ENCODE measurements at regions of chr20 and their contacts with region 1.

Region 1: DNA sequence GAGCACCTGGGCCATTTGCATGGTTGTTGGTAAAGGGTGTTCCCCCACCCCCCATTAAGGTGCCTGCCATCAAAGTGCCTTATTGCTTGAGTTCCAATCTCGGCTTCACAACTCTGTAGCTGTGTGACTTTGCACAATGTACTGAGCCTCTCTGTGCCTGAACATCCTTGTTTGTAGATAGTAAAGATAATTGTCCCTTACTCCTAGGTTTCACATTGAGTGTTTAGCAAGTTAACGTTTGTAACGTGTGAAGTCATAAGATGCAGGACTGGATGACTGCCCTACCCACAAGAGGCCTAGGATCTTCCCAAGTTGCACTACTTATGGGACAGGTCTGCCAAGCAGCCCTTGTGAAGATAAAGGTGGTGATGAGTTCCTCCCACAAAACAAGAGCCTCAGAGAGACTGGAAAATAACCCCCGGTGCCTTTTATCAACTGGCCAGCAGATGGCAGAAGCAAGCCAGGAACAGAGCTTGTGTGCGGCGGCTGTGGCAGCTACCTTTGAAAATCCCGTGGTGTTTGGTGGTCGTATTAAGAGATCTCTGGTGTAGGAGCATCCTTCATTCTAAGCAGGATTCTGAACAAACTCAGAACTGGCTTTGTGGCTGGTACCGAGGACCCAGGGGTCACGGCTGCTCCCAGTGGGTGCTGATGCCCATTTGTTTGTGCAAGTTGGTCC is 99.0 kb downstream of the CDH26 start:
- DNase-seq: peak; percentile 38 to 83 (median 54)
- ATAC-seq: peak; percentile 51
- H3K4me3 ChIP-seq: peak overlapping the region; percentile 55
- H3K4me3 Mint-ChIP-seq: peak overlapping the region; percentile 32
- H3K27ac ChIP-seq: peak overlapping the region; percentile 17 to 57
- H3K27ac Mint-ChIP-seq: peak overlapping the region; percentile 89
- H3K4me1 ChIP-seq: peaks cover 50% of the 10 kb centered on the region
- H3K4me1 Mint-ChIP-seq: peaks cover 54% of the 10 kb centered on the region
- H3K27me3 ChIP-seq: no peaks in the 10 kb centered on the region
- H3K27me3 Mint-ChIP-seq: no peaks in the 10 kb centered on the region
- CTCF ChIP-seq: peak; percentile 79

Region 2: GRCh38 chr20:59940174-59940971 is 116.9 kb before region 1 on chr20 and contains the starts of genes FAM217B and PPP1R3D:
- CTCF ChIA-PET with region 1: interaction called, 3 read pairs
- POLR2A ChIA-PET with region 1: interaction called, 32 read pairs
- intact Hi-C with region 1: no loop called
- DNase-seq: peak; percentile 72 to 95 (median 88)
- ATAC-seq: peak; percentile 97
- H3K4me3 ChIP-seq: peak within 1 kb of the TSS; percentile 70
- H3K4me3 Mint-ChIP-seq: peak within 1 kb of the TSS; percentile 99
- H3K27ac ChIP-seq: peak within 1 kb of the TSS; percentile 78 to 91
- H3K27ac Mint-ChIP-seq: peak within 1 kb of the TSS; percentile 99
- H3K4me1 ChIP-seq: peaks cover 23% of the 10 kb centered on the region
- H3K4me1 Mint-ChIP-seq: peaks cover 58% of the 10 kb centered on the region
- H3K27me3 ChIP-seq: no peaks in the 10 kb centered on the region
- H3K27me3 Mint-ChIP-seq: no peaks in the 10 kb centered on the region
- CTCF ChIP-seq: no peak
- total RNA-seq, gene FAM217B: 23.1 to 23.7 TPM
- total RNA-seq, gene PPP1R3D: 5.1 to 5.4 TPM

Region 3: DNA sequence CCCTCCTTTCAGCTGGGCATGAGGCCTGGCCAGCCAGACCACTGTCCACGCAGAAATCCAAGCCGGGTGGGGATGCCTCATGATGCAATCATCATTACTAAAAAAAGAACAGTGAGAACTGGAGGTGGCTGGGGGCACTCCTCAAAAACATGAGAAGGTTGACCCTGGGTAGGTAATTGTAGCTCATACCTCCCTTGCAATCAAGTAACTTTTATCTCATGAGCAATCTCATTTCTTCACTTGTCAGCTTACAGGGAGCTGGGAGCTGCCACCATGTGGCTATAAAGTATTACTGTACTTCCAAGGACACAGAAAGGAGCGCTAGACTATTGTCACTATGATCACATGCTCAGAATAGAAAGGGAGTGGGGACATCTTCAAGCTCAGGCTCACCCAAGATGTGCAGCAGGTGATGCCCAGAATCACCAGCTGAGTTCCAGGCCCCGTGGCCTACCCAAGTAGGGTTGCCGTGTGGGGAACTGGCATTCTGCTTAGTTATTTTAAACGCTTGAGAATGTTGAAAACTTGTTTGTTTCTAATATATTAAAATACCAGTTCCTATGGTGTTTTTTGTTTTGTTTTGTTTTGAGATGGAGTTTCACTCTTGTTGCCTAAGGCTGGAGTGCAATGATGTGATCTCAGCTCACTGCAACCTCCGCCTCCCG is 102.0 kb before region 1 on chr20:
- CTCF ChIA-PET with region 1: no interaction called
- POLR2A ChIA-PET with region 1: no interaction called
- intact Hi-C with region 1: loop called in 1 of 2 experiments (anchors 5 kb)
- DNase-seq: peak in 2 of 14 experiments; percentile 21 to 35
- ATAC-seq: no peak
- H3K4me3 ChIP-seq: no peak overlapping the region
- H3K4me3 Mint-ChIP-seq: no peak overlapping the region
- H3K27ac ChIP-seq: no peak overlapping the region
- H3K27ac Mint-ChIP-seq: no peak overlapping the region
- H3K4me1 ChIP-seq: no peaks in the 10 kb centered on the region
- H3K4me1 Mint-ChIP-seq: no peaks in the 10 kb centered on the region
- H3K27me3 ChIP-seq: no peaks in the 10 kb centered on the region
- H3K27me3 Mint-ChIP-seq: no peaks in the 10 kb centered on the region
- CTCF ChIP-seq: no peak

Region 4: GRCh38 chr20:60820918-60821317 is 763.7 kb after region 1 on chr20:
- CTCF ChIA-PET with region 1: no interaction called
- POLR2A ChIA-PET with region 1: no interaction called
- intact Hi-C with region 1: no loop called
- DNase-seq: peak in 1 of 14 experiments; percentile 18
- ATAC-seq: no peak
- H3K4me3 ChIP-seq: no peak overlapping the region
- H3K4me3 Mint-ChIP-seq: no peak overlapping the region
- H3K27ac ChIP-seq: no peak overlapping the region
- H3K27ac Mint-ChIP-seq: no peak overlapping the region
- H3K4me1 ChIP-seq: no peaks in the 10 kb centered on the region
- H3K4me1 Mint-ChIP-seq: peaks cover 15% of the 10 kb centered on the region
- H3K27me3 ChIP-seq: no peaks in the 10 kb centered on the region
- H3K27me3 Mint-ChIP-seq: peaks cover 10% of the 10 kb centered on the region
- CTCF ChIP-seq: no peak

Region 5: DNA sequence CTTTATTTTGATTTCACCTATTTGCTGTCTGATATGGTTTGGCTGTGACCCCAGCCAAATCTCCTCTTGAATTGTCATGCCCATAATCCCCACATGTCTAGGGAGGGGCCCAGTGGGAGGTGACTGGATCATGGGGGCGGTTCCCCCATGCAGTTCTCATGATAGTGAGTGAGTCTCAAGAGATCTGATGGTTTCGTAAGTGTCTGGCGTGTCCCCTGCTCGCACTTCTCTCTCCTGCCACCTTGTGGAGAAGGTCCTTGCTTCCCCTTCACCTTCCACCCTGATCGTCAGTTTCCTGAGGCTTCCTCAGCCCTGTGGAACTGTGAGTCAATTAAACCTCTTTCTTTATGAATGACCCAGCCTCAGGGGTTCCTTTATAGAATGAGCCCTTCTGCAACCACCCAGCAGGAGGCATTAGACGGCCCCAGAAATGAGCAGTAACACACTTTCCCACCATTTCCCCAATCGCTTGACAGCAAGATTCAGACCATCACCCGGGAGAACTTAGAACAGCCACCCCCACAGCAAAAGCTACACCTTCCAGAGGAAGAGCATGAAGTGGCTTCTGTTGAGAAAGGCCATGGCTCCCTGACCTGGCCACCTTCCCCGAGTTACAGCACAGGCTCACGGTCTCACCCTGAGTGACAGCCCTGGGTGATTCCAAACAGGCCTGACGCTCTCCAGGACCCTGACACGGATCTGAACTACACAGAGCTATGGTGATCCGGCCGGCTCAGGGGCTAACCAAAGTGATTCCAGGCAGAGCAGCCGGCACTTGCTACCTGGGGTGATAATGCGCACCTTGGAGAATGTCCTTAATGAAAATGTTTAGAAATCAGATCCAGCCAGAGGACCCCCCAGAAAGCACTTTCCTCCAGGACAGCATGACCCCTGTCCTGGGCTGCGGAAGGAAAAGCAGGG is 1063.6 kb after region 1 on chr20:
- CTCF ChIA-PET with region 1: interaction called, 3 read pairs
- POLR2A ChIA-PET with region 1: no interaction called
- intact Hi-C with region 1: loop called in 1 of 2 experiments (anchors 2 kb)
- DNase-seq: peak in 6 of 14 experiments; percentile 6 to 58 (median 30)
- ATAC-seq: peak; percentile 56
- H3K4me3 ChIP-seq: no peak overlapping the region
- H3K4me3 Mint-ChIP-seq: no peak overlapping the region
- H3K27ac ChIP-seq: no peak overlapping the region
- H3K27ac Mint-ChIP-seq: no peak overlapping the region
- H3K4me1 ChIP-seq: no peaks in the 10 kb centered on the region
- H3K4me1 Mint-ChIP-seq: no peaks in the 10 kb centered on the region
- H3K27me3 ChIP-seq: peaks cover 0 to 2% of the 10 kb centered on the region in 2 experiments
- H3K27me3 Mint-ChIP-seq: peaks cover 5% of the 10 kb centered on the region
- CTCF ChIP-seq: peak; percentile 30

Region 6: DNA sequence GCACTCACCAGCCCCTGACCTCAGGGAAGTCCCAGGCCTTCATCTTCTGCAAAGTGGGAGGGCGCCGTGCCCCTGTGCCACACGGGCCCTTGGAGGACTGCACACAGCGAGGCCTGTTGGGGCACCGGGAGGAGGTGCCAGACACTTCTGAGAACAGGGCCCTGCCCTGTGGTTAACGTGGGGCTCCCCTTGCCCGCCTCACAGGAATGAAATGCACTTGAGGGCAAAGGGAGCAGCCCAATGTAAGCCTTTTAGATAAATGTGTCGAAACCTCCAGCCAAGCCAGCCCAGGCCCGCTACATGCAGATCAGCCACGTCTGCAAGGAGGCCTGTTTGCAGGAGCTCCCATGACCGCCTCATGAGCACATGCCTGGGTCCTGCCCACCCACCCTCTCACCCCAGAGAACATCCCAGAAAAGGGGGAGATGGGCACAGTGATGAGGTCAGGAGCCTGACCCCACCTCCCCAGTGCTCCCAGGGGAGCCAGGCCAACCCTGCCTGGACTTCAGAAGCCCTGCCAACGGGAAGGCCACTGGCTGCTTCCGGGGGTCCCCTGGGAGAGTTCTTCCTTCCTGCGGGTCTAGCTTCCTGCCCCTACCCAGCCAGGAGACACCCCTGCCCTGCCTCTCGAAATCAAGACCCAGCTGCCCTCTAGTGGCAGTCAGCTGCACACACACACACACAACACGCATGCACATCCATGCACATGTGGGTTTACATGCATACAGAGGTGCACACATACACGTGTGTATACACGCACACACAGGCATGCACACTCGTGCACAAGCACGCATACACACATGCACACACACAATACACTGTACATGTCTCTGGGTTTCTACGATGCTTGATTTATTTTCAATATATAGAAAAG is 1829.7 kb after region 1 on chr20:
- CTCF ChIA-PET with region 1: no interaction called
- POLR2A ChIA-PET with region 1: no interaction called
- intact Hi-C with region 1: loop called (anchors 5 kb)
- DNase-seq: peak in 12 of 14 experiments; percentile 4 to 51 (median 17)
- ATAC-seq: peak; percentile 44
- H3K4me3 ChIP-seq: no peak overlapping the region
- H3K4me3 Mint-ChIP-seq: no peak overlapping the region
- H3K27ac ChIP-seq: no peak overlapping the region
- H3K27ac Mint-ChIP-seq: no peak overlapping the region
- H3K4me1 ChIP-seq: no peaks in the 10 kb centered on the region
- H3K4me1 Mint-ChIP-seq: peaks cover 4% of the 10 kb centered on the region
- H3K27me3 ChIP-seq: peaks cover 0 to 4% of the 10 kb centered on the region in 2 experiments
- H3K27me3 Mint-ChIP-seq: no peaks in the 10 kb centered on the region
- CTCF ChIP-seq: peak; percentile 72